Activated CD4-positive, alpha-beta T cell treated with anti-CD3 and anti-CD28 coated beads for 36 hours (primary cell): ENCODE measurements at regions of chr1 and their contacts with region 1.

Region 1: DNA sequence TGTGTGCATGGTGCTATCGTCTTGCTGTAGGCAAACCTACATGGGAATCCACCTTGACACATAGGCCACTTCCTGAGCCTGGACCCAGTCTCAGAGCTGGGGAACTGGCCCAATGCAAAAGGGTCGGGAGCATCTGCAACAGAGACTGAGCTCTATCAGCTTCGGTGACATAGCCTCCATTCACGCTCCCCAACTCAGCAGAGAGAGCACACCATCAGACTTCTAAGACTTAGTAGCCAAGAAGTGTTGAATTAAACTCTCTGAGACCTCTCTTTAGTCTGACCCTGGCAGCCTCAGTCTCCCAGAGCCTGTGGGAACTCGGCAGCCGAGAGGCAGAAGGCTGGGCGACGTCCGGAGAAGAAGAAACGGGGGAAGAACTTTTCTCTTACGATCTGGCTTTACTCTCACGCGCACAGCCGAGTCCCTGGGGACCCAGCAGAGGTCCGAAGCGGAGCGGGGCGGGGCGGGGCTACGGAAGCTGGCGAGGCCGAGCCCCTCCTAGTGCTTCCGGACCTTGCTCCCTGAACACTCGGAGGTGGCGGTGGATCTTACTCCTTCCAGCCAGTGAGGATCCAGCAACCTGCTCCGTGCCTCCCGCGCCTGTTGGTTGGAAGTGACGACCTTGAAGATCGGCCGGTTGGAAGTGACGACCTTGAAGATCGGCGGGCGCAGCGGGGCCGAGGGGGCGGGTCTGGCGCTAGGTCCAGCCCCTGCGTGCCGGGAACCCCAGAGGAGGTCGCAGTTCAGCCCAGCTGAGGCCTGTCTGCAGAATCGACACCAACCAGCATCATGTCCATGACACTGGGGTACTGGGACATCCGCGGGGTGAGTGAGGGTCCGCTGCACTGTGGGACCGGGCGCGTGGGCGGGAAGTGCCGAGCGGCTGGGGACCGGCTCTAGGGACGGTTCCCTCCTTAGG is at the start of gene GSTM4:
- DNase-seq: peak; percentile 85
- ATAC-seq: peak; percentile 96
- H3K4me3 Mint-ChIP-seq: peak within 1 kb of the TSS; percentile 93
- H3K27ac Mint-ChIP-seq: peak within 1 kb of the TSS; percentile 90
- H3K4me1 Mint-ChIP-seq: peaks cover 12% of the 10 kb centered on the region
- H3K27me3 Mint-ChIP-seq: peaks cover 3% of the 10 kb centered on the region
- total RNA-seq, gene GSTM4: 18.1 to 20.6 TPM

Region 2: GRCh38 chr1:109739738-109740660 is 84.1 kb after region 1 on chr1:
- CTCF ChIA-PET with region 1: interaction called, 3 read pairs
- POLR2A ChIA-PET with region 1: no interaction called
- intact Hi-C with region 1: loop called in 1 of 2 experiments (anchors 2 kb)
- DNase-seq: peak; percentile 92
- ATAC-seq: peak; percentile 99
- H3K4me3 Mint-ChIP-seq: peak overlapping the region; percentile 82
- H3K27ac Mint-ChIP-seq: peak overlapping the region; percentile 79
- H3K4me1 Mint-ChIP-seq: peaks cover 16% of the 10 kb centered on the region
- H3K27me3 Mint-ChIP-seq: peaks cover 1% of the 10 kb centered on the region